Activated CD8-positive, alpha-beta T cell treated with anti-CD3 and anti-CD28 coated beads for 36 hours (primary cell): ENCODE measurements at regions of chr11 and their contacts with region 1.

Region 1: GRCh38 chr11:65418711-65419459 is 3.7 kb upstream of the NEAT1 start:
- DNase-seq: peak; percentile 98
- ATAC-seq: peak; percentile 53
- H3K4me3 Mint-ChIP-seq: peak overlapping the region; percentile 89
- H3K27ac Mint-ChIP-seq: peak overlapping the region; percentile 98
- H3K4me1 Mint-ChIP-seq: peaks cover 36% of the 10 kb centered on the region
- H3K27me3 Mint-ChIP-seq: peaks cover 8% of the 10 kb centered on the region
- CTCF ChIP-seq: no peak

Region 2: DNA sequence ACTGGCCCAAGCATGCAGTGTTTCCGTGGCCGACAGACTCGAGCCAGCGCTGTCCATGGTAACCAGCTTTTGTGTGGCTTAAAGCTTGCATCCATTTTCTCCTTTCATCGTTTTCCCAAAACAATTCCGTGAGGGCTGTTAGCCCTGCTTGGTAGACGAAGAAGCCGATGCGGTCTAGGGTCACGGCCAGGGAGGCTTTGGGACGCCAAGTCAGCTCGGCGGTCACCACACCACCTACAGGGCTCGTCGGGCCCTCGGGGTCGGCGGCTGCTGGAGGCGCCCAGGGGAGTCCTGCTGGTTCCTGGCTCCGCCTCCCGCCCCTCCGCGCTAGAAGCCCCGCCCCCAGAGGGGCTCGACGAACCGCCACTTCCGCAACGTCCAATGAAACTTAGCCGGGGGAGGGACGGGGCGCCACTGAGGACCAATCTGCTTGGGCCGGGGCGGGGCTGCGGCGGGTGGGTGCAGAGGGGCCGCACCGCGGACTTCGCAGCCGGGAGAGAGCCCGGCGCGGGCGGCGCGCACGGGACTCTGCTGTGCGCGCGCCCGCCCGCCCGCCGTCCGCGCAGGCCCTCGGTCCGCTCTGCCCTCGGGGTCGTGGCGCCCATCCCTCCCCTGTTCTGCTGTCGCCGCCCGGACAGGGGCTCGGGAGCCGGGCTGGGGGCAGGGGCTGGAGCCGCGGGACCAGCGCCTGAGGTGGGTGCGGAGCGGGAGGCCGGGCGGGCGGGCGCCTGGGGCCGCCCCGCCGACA is 64.4 kb before region 1 on chr11 and contains the start of gene TIGD3:
- CTCF ChIA-PET with region 1: interaction called, 7 read pairs
- POLR2A ChIA-PET with region 1: interaction called, 17 read pairs
- intact Hi-C with region 1: no loop called
- DNase-seq: peak; percentile 99
- ATAC-seq: peak; percentile 99
- H3K4me3 Mint-ChIP-seq: peak within 1 kb of the TSS; percentile 82
- H3K27ac Mint-ChIP-seq: peak within 1 kb of the TSS; percentile 63
- H3K4me1 Mint-ChIP-seq: peaks cover 13% of the 10 kb centered on the region
- H3K27me3 Mint-ChIP-seq: no peaks in the 10 kb centered on the region
- CTCF ChIP-seq: no peak
- total RNA-seq, gene TIGD3: 0.65 to 1.4 TPM

Region 3: GRCh38 chr11:65391007-65391406 is 27.9 kb before region 1 on chr11:
- CTCF ChIA-PET with region 1: interaction called, 20 read pairs
- POLR2A ChIA-PET with region 1: interaction called, 339 read pairs
- intact Hi-C with region 1: no loop called
- DNase-seq: no peak
- ATAC-seq: no peak
- H3K4me3 Mint-ChIP-seq: no peak overlapping the region
- H3K27ac Mint-ChIP-seq: no peak overlapping the region
- H3K4me1 Mint-ChIP-seq: peaks cover 47% of the 10 kb centered on the region
- H3K27me3 Mint-ChIP-seq: no peaks in the 10 kb centered on the region
- CTCF ChIP-seq: no peak

Region 4: DNA sequence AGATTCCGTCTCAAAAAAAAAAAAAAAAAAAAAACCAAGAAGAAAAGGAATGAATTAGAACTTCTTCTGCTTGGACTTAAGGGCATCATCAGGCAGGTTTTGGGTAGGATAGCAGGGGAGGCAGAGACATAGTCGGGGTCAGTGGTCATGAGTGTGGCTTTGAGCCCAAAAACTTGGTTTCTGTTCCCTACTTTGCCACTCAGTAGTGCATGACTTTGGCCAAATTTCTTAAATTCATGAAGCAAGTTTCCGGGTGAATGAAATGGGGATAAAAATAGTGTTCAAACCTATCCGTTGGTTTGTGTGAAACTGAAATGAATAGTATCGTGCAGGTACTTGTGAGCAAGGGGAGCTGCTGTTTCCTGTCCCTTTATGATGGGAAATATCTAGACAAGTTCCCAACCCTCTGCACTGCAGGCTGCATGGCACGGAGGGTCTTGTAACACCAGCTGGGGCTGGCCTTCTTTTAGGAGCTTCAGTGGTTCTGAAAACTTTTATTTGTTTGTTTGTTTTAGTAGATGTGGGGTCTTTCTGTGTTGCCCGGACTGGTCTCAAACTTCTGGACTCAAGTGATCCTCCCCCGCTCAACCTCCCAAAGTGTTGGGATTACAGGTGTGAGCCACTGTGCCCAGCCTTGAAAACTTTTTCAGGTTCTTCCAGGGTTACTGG is 22.1 kb after region 1 on chr11:
- CTCF ChIA-PET with region 1: interaction called, 11 read pairs
- POLR2A ChIA-PET with region 1: interaction called, 41 read pairs
- intact Hi-C with region 1: no loop called
- DNase-seq: no peak
- ATAC-seq: peak; percentile 25
- H3K4me3 Mint-ChIP-seq: peak overlapping the region; percentile 15
- H3K27ac Mint-ChIP-seq: peak overlapping the region; percentile 87
- H3K4me1 Mint-ChIP-seq: peaks cover 63% of the 10 kb centered on the region
- H3K27me3 Mint-ChIP-seq: no peaks in the 10 kb centered on the region
- CTCF ChIP-seq: no peak

Region 5: GRCh38 chr11:65477149-65477965 is 58.5 kb after region 1 on chr11:
- CTCF ChIA-PET with region 1: interaction called, 34 read pairs
- POLR2A ChIA-PET with region 1: interaction called, 391 read pairs
- intact Hi-C with region 1: no loop called
- DNase-seq: peak; percentile 94
- ATAC-seq: peak; percentile 85
- H3K4me3 Mint-ChIP-seq: peak overlapping the region; percentile 96
- H3K27ac Mint-ChIP-seq: peak overlapping the region; percentile 100
- H3K4me1 Mint-ChIP-seq: peaks cover 8% of the 10 kb centered on the region
- H3K27me3 Mint-ChIP-seq: no peaks in the 10 kb centered on the region
- CTCF ChIP-seq: no peak

Region 6: GRCh38 chr11:65516135-65516935 is 97.5 kb after region 1 on chr11:
- CTCF ChIA-PET with region 1: interaction called, 448 read pairs
- POLR2A ChIA-PET with region 1: interaction called, 4,842 read pairs
- intact Hi-C with region 1: no loop called
- DNase-seq: no peak
- ATAC-seq: peak; percentile 57
- H3K4me3 Mint-ChIP-seq: no peak overlapping the region
- H3K27ac Mint-ChIP-seq: peak overlapping the region; percentile 31
- H3K4me1 Mint-ChIP-seq: peaks cover 11% of the 10 kb centered on the region
- H3K27me3 Mint-ChIP-seq: no peaks in the 10 kb centered on the region
- CTCF ChIP-seq: no peak

Region 7: GRCh38 chr11:65540297-65541092 is 121.6 kb after region 1 on chr11:
- CTCF ChIA-PET with region 1: interaction called, 3 read pairs
- POLR2A ChIA-PET with region 1: interaction called, 11 read pairs
- intact Hi-C with region 1: no loop called
- DNase-seq: peak; percentile 92
- ATAC-seq: peak; percentile 93
- H3K4me3 Mint-ChIP-seq: peak overlapping the region; percentile 76
- H3K27ac Mint-ChIP-seq: peak overlapping the region; percentile 86
- H3K4me1 Mint-ChIP-seq: peaks cover 22% of the 10 kb centered on the region
- H3K27me3 Mint-ChIP-seq: no peaks in the 10 kb centered on the region
- CTCF ChIP-seq: peak; percentile 75